ENCODE measurements at regions of chr3 and their contacts with region 1.

Region 1: GRCh38 chr3:117019082-117019713 is 309.6 kb downstream of the TUSC7 start:
- DNase-seq: peak; percentile 40 to 66
- H3K4me3 ChIP-seq: no peak overlapping the region
- H3K27ac ChIP-seq: no peak overlapping the region
- H3K4me1 ChIP-seq: no peaks in the 10 kb centered on the region
- H3K27me3 ChIP-seq: no peaks in the 10 kb centered on the region
- CTCF ChIP-seq: peak; percentile 46 to 77 (median 66)
- POLR2A ChIP-seq: no peak

Region 2: GRCh38 chr3:117184574-117184973 is 165.4 kb after region 1 on chr3:
- intact Hi-C with region 1: no loop called
- DNase-seq: no peak
- H3K4me3 ChIP-seq: no peak overlapping the region
- H3K27ac ChIP-seq: no peak overlapping the region
- H3K4me1 ChIP-seq: no peaks in the 10 kb centered on the region
- H3K27me3 ChIP-seq: no peaks in the 10 kb centered on the region
- CTCF ChIP-seq: no peak
- POLR2A ChIP-seq: no peak

Region 3: DNA sequence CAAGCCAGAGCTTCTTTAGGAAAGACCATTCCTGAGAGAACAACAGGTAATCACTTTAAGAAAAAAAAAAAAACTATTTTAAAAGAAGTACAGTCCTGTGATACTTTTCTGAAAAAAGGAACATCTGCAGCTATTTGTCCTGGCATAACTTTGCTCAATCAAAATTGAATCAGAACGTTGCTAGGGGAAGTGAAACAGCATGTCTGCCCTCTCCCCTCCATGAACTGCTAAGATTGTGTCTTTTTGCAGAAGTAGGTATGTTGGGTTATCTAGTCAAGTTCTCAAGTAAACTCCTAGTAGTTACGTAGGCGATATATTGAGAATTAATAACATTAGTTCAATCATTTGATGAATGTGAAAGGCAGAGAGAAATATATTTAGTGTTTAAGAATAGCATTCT is 703.7 kb after region 1 on chr3:
- intact Hi-C with region 1: loop called (anchors 10 kb)
- DNase-seq: no peak
- H3K4me3 ChIP-seq: no peak overlapping the region
- H3K27ac ChIP-seq: no peak overlapping the region
- H3K4me1 ChIP-seq: no peaks in the 10 kb centered on the region
- H3K27me3 ChIP-seq: no peaks in the 10 kb centered on the region
- CTCF ChIP-seq: no peak
- POLR2A ChIP-seq: no peak

Measured in thyroid gland (tissue), 4 donors.